Lower leg skin (tissue), 4 donors: ENCODE measurements at regions of chr5 and their contacts with region 1.

Region 1: GRCh38 chr5:154179846-154180710 is 10.5 kb upstream of the GALNT10 start:
- DNase-seq: no peak
- H3K4me3 ChIP-seq: no peak overlapping the region
- CTCF ChIP-seq: no peak
- POLR2A ChIP-seq: no peak

Region 2: GRCh38 chr5:154072414-154073171 is 107.5 kb before region 1 on chr5:
- intact Hi-C with region 1: loop called (anchors 5 kb)
- DNase-seq: peak; percentile 73 to 95
- H3K4me3 ChIP-seq: no peak overlapping the region
- CTCF ChIP-seq: peak in 1 of 3 donors; percentile 61
- POLR2A ChIP-seq: no peak

Region 3: DNA sequence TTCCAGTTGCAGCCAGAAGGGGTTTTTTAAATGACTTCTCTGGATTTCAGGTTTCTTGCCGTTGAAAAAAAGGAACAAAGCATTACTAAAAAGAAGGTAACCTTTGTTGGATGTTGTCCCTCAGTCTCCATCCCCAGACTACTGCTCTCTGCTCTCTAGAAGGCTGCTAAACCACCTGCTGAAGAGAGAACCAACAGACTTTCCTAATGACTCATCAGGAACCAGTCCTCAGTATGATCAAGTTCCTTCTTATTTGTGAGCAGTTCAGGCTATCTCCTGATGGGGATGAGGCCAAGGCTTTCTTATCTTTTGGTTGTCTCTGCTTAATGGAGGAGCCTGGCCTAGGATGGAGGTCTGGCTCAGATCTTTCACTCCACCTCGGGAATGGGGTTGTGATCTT is 837.5 kb after region 1 on chr5:
- intact Hi-C with region 1: no loop called
- DNase-seq: no peak
- H3K4me3 ChIP-seq: no peak overlapping the region
- CTCF ChIP-seq: no peak
- POLR2A ChIP-seq: no peak